ENCODE measurements at regions of chr14 and their contacts with region 1.

Region 1: DNA sequence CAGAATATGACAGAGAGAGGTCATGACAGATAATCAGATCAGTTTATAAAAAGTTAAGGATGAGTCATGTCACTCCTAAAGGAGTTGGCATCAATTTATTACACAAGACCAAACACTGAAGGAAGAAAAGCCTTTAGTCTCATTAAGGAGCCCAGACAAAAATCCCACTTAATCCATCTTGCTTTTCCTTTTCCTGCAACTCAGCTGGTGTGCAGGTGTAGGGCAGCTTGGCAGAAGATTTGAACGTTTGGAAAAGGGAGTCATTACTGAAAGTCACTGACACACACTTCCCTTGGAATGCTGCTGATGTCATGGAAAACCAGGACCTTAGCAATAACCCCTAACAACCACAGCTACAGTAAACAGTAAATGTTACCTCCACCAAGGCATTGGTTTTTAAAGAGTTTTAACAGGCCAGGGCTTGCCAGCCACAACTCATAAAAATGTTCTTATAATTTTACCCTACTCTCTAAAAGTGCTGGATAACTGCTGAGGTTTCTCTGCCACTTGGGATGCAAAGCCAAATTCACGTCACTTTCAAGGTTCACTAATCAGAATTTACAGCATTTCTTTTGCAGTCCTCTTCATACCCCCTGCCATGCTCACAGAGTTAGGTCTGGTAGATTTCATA is 320.6 kb downstream of the RAD51B start:
- DNase-seq: peak; percentile 93
- ATAC-seq: peak; percentile 89
- H3K4me3 ChIP-seq: no peak overlapping the region
- H3K27ac ChIP-seq: peak overlapping the region; percentile 90
- H3K4me1 ChIP-seq: peaks cover 24% of the 10 kb centered on the region
- H3K27me3 ChIP-seq: no peaks in the 10 kb centered on the region
- CTCF ChIP-seq: no peak

Region 2: GRCh38 chr14:68124050-68124449 is 16.2 kb before region 1 on chr14:
- CTCF ChIA-PET with region 1: no interaction called
- POLR2A ChIA-PET with region 1: no interaction called
- in situ Hi-C with region 1: no loop called
- intact Hi-C with region 1: no loop called
- DNase-seq: no peak
- ATAC-seq: no peak
- H3K4me3 ChIP-seq: no peak overlapping the region
- H3K27ac ChIP-seq: no peak overlapping the region
- H3K4me1 ChIP-seq: peaks cover 7% of the 10 kb centered on the region
- H3K27me3 ChIP-seq: no peaks in the 10 kb centered on the region
- CTCF ChIP-seq: no peak

Region 3: GRCh38 chr14:68232300-68233055 is 92.3 kb after region 1 on chr14:
- CTCF ChIA-PET with region 1: no interaction called
- POLR2A ChIA-PET with region 1: no interaction called
- in situ Hi-C with region 1: no loop called
- intact Hi-C with region 1: loop called (anchors 10 kb)
- DNase-seq: peak; percentile 91
- ATAC-seq: peak; percentile 97
- H3K4me3 ChIP-seq: no peak overlapping the region
- H3K27ac ChIP-seq: peak overlapping the region; percentile 93
- H3K4me1 ChIP-seq: peaks cover 32% of the 10 kb centered on the region
- H3K27me3 ChIP-seq: no peaks in the 10 kb centered on the region
- CTCF ChIP-seq: no peak